Aorta (tissue), 5 donors: ENCODE measurements at regions of chr2 and their contacts with region 1.

Region 1: DNA sequence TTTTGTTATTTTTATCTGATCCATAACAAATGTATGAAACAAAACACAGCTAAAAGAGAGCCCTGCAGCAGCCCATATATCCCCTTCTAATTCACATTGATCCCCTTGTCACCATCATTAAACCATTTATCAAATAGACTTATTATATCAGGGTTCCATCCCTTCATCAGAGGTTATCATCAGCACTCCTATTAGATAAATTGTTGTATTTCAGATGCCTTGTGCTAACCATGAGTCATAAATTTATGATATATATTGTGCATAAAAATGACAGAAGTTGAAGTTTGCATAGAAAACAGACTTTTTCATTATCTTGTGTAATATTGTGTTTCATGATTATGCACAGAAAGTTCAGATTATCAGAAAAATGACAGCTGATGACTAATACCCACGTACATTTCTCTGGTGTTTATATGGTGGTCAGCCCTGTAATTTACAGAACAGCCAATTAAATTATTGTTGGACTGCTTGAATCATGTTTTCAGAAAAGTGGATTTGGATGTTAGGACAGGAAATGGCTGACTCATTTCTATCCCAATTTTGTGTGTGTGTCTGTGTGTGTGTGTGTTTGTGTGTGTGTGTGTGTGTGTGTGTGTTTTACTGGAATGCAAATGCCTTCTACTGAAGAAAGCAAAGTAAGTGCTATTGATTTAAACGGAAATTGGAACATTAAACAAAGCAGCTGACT is 80.9 kb downstream of the PPP1R1C start:
- DNase-seq: no peak
- ATAC-seq: no peak
- H3K4me3 ChIP-seq: no peak overlapping the region
- H3K27ac ChIP-seq: no peak overlapping the region
- H3K4me1 ChIP-seq: peaks cover 2 to 9% of the 10 kb centered on the region in 2 donors
- H3K27me3 ChIP-seq: no peaks in the 10 kb centered on the region

Region 2: DNA sequence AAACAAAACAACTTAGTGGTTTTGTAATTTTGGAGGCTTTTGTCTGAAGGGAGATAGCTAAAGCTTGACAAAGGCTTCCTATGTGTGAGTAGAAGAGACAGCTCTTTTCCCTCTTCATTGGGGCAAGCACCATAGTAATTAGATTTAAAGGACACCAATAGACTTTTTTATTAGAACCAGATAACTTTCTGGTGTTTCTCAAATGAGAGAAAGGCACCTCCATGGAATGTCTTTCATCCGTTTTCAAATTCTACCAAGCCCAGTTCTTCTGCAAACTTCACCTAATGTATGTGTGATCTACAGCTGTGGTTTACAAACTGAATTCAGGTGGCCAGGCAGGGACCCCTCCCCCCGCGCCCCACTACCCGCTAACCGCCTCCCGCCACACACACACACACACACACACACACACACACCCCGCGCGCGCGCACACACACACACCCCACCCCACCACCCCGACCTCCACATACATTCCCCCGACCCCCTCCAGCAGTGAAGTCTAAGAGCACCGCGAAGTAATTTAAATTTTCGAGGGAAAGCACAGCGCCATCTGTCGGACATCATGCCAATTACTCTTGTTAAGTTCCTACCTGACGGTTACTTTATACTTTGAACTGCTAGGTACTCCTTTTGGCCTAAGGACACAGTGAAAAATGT is 112.5 kb before region 1 on chr2:
- intact Hi-C with region 1: loop called (anchors 10 kb)
- DNase-seq: peak; percentile 58 to 76
- ATAC-seq: peak; percentile 75
- H3K4me3 ChIP-seq: peak overlapping the region; percentile 16 to 29
- H3K27ac ChIP-seq: no peak overlapping the region
- H3K4me1 ChIP-seq: no peaks in the 10 kb centered on the region
- H3K27me3 ChIP-seq: no peaks in the 10 kb centered on the region